PC-9 (cell line): ENCODE measurements at regions of chr22 and their contacts with region 1.

Region 1: DNA sequence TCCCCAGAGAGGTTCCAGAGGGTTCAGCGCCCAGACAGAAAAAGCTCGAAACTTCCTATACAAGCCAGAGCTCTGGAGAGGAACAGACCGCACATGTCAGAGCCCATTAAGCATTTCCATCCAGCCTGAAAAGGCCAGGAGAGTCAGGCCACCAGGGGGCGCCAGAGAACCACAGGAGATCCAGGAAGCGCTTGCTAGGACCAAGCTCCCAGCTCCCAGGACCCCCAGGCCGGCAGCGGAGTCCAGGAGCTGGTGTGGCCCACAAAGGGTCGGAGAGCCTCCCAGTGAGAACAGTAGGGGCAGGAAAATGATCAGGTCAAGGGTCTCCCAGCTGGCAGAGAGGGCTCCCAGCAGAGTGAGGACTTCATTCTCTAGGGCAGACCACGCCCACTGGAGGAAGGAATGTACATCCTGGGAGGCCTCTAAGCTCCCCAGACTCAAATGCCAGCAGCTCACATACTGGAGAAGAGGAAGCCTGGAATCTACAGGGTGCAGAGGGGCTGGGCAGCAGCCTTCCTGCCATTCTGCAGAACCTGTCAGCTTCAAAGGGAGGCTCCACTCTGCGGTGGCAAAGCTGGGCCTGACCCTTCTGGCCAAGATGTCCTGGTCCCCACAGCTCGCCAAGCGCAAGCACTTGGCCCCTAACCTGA is 2.1 kb upstream of the MEI1 start:
- DNase-seq: peak; percentile 70 to 92
- H3K4me3 ChIP-seq: peak overlapping the region; percentile 43; the same call in 1 of the 2 replicates
- H3K27ac ChIP-seq: no peak overlapping the region
- H3K4me1 ChIP-seq: peaks cover 6% of the 10 kb centered on the region; the same call in 1 of the 2 replicates
- H3K27me3 ChIP-seq: no peaks in the 10 kb centered on the region
- CTCF ChIP-seq: peak; percentile 100

Region 2: GRCh38 chr22:41682033-41682807 is 15.0 kb before region 1 on chr22:
- CTCF ChIA-PET with region 1: interaction called, 10 read pairs
- POLR2A ChIA-PET with region 1: no interaction called
- intact Hi-C with region 1: no loop called
- DNase-seq: peak; percentile 64 to 85
- H3K4me3 ChIP-seq: peak overlapping the region; percentile 65
- H3K27ac ChIP-seq: peak overlapping the region; percentile 59
- H3K4me1 ChIP-seq: peaks cover 22% of the 10 kb centered on the region
- H3K27me3 ChIP-seq: no peaks in the 10 kb centered on the region
- CTCF ChIP-seq: no peak

Region 3: DNA sequence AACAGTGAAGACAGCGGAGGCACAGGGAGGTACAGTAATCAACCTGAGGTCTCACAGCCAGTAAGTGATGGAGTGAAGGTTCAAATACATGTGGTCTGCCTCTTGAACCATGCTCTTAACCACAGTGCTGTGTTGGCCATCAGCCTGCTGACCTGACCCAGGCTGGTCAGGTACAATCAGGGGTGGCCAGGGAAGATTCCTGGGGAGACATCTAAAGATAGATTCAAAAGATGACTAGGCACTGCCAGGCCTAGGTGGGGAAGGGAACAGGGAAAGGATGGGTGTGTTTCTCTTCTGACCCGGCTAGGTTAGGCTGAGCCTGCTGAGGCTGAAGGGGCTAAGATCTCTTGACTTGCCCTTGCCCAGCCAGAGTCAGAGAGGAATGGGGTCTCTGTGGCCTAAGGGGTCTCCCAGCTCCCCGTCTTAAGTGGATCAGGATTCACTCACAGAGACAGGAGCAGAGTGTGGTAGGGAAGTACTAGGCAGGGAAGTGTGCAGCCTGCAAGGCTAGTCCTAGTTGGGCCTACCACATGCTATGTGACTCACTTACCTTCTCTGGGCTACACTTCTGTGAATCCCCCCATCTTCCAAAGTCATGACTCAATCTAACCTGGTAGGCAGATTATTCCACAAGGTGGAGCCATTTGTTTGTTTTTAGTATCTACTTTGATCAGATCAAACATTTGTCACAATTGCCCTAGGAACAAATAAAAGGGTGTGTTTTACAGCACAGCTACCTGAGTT is 125.2 kb after region 1 on chr22:
- CTCF ChIA-PET with region 1: interaction called, 3 read pairs
- POLR2A ChIA-PET with region 1: no interaction called
- intact Hi-C with region 1: loop called (anchors 5 kb)
- DNase-seq: peak in 1 of 2 experiments; percentile 90
- H3K4me3 ChIP-seq: no peak overlapping the region
- H3K27ac ChIP-seq: no peak overlapping the region
- H3K4me1 ChIP-seq: peaks cover 9% of the 10 kb centered on the region
- H3K27me3 ChIP-seq: no peaks in the 10 kb centered on the region
- CTCF ChIP-seq: peak; percentile 90

Region 4: GRCh38 chr22:41857155-41857859 is 160.1 kb after region 1 on chr22:
- CTCF ChIA-PET with region 1: interaction called, 14 read pairs
- POLR2A ChIA-PET with region 1: no interaction called
- intact Hi-C with region 1: loop called (anchors 1 kb)
- DNase-seq: peak; percentile 67 to 97
- H3K4me3 ChIP-seq: no peak overlapping the region
- H3K27ac ChIP-seq: peak overlapping the region; percentile 76
- H3K4me1 ChIP-seq: peaks cover 51% of the 10 kb centered on the region
- H3K27me3 ChIP-seq: no peaks in the 10 kb centered on the region
- CTCF ChIP-seq: peak; percentile 97

Region 5: DNA sequence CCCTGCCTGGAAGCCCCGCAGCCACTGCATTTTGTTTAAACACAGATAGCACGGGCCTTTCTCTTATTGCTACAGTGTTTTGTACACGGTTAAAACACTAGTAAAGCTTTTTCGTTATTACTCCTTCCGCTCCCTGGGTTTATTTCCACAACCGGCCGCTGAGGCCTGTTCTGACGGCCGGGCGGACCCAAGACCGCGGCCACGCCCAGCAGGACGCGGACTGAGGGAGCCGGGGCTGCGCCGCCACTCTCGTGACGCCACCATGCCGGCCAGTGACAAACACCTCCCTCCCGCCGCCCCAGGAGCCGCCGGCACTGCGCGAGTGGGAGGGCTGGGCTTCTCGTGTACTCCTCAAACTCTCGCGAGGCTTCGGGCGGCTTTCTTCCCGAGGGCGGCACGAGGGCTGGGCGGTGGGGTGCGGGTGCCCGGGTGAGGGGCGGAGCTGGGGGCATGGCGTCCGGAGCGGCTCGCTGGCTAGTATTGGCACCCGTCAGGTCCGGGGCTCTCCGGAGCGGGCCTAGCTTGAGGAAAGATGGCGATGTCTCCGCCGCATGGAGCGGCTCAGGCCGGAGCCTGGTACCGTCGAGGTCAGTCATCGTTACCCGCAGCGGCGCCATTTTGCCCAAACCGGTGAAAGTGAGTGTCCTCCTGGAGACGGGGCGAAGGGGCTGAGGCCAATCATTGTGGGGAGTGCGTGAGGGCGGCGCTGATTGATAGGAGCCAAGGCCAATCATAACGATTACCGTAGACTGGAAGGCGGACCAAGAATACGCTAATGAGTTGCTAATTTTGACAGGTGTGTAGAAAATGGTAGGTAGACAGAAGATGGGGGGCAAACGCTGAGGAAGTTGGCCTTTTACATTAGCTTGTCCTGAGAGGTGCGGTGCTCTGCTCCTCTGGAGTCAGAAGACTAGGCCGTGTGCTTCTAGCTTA is 382.3 kb after region 1 on chr22 and contains the start of gene SMDT1:
- CTCF ChIA-PET with region 1: no interaction called
- POLR2A ChIA-PET with region 1: interaction called, 14 read pairs
- intact Hi-C with region 1: no loop called
- DNase-seq: peak; percentile 95 to 98
- H3K4me3 ChIP-seq: peak within 1 kb of the TSS; percentile 85
- H3K27ac ChIP-seq: peak within 1 kb of the TSS; percentile 81
- H3K4me1 ChIP-seq: peaks cover 14% of the 10 kb centered on the region
- H3K27me3 ChIP-seq: no peaks in the 10 kb centered on the region
- CTCF ChIP-seq: no peak
- total RNA-seq, gene SMDT1: 55.3 and 72.8 TPM in 2 replicates

Region 6: GRCh38 chr22:42247596-42247995 is 550.3 kb after region 1 on chr22:
- CTCF ChIA-PET with region 1: no interaction called
- POLR2A ChIA-PET with region 1: no interaction called
- intact Hi-C with region 1: no loop called
- DNase-seq: no peak
- H3K4me3 ChIP-seq: no peak overlapping the region
- H3K27ac ChIP-seq: no peak overlapping the region
- H3K4me1 ChIP-seq: no peaks in the 10 kb centered on the region
- H3K27me3 ChIP-seq: no peaks in the 10 kb centered on the region
- CTCF ChIP-seq: no peak